HCT116 (cell line): ENCODE measurements at regions of chr3 and their contacts with region 1.

Region 1: GRCh38 chr3:167882067-167882667 is 146.6 kb downstream of the SERPINI1 start:
- DNase-seq: peak; percentile 39
- ATAC-seq: peak; percentile 65
- H3K4me3 ChIP-seq: no peak overlapping the region
- H3K27ac ChIP-seq: no peak overlapping the region
- H3K4me1 ChIP-seq: no peaks in the 10 kb centered on the region
- H3K27me3 ChIP-seq: no peaks in the 10 kb centered on the region
- CTCF ChIP-seq: peak; percentile 52 to 58 (median 55); a peak in 5 of 6 replicates
- POLR2A ChIP-seq: no peak
- RAD21 ChIP-seq: peak; percentile 72

Region 2: GRCh38 chr3:167380004-167380689 is 502.0 kb before region 1 on chr3 and contains the start of gene ZBBX:
- CTCF ChIA-PET with region 1: interaction called, 40 read pairs
- POLR2A ChIA-PET with region 1: interaction called, 4 read pairs
- RAD21 ChIA-PET with region 1: interaction called in 1 of 2 experiments, 7 read pairs
- intact Hi-C with region 1: loop called (anchors 5 kb)
- DNase-seq: peak; percentile 77
- ATAC-seq: peak; percentile 92
- H3K4me3 ChIP-seq: peak within 1 kb of the TSS; percentile 54 to 61
- H3K27ac ChIP-seq: no peak within 1 kb of the TSS
- H3K4me1 ChIP-seq: peaks cover 0 to 11% of the 10 kb centered on the region in 2 experiments; a peak in 3 of 4 replicates
- H3K27me3 ChIP-seq: no peaks in the 10 kb centered on the region
- CTCF ChIP-seq: peak; percentile 74 to 94 (median 88)
- POLR2A ChIP-seq: no peak
- RAD21 ChIP-seq: peak; percentile 71
- total RNA-seq, gene ZBBX: 0.81 TPM

Region 3: GRCh38 chr3:167406875-167407492 is 475.2 kb before region 1 on chr3:
- CTCF ChIA-PET with region 1: interaction called, 14 read pairs
- POLR2A ChIA-PET with region 1: interaction called, 3 read pairs
- RAD21 ChIA-PET with region 1: no interaction called
- intact Hi-C with region 1: loop called (anchors 2 kb)
- DNase-seq: peak; percentile 58
- ATAC-seq: peak; percentile 99
- H3K4me3 ChIP-seq: no peak overlapping the region
- H3K27ac ChIP-seq: no peak overlapping the region
- H3K4me1 ChIP-seq: no peaks in the 10 kb centered on the region
- H3K27me3 ChIP-seq: no peaks in the 10 kb centered on the region
- CTCF ChIP-seq: peak; percentile 58 to 81 (median 79)
- POLR2A ChIP-seq: no peak
- RAD21 ChIP-seq: peak; percentile 88

Region 4: GRCh38 chr3:167684388-167684993 is 197.7 kb before region 1 on chr3:
- CTCF ChIA-PET with region 1: interaction called, 6 read pairs
- POLR2A ChIA-PET with region 1: no interaction called
- RAD21 ChIA-PET with region 1: no interaction called
- intact Hi-C with region 1: loop called (anchors 10 kb)
- DNase-seq: peak; percentile 46
- ATAC-seq: peak; percentile 73
- H3K4me3 ChIP-seq: no peak overlapping the region
- H3K27ac ChIP-seq: no peak overlapping the region
- H3K4me1 ChIP-seq: no peaks in the 10 kb centered on the region
- H3K27me3 ChIP-seq: no peaks in the 10 kb centered on the region
- CTCF ChIP-seq: peak; percentile 28 to 74 (median 53); a peak in 5 of 6 replicates
- POLR2A ChIP-seq: no peak
- RAD21 ChIP-seq: peak; percentile 48

Region 5: GRCh38 chr3:167837466-167837865 is 44.7 kb before region 1 on chr3:
- CTCF ChIA-PET with region 1: interaction called, 7 read pairs
- POLR2A ChIA-PET with region 1: no interaction called
- RAD21 ChIA-PET with region 1: no interaction called
- intact Hi-C with region 1: loop called (anchors 5 kb)
- DNase-seq: no peak
- ATAC-seq: no peak
- H3K4me3 ChIP-seq: no peak overlapping the region
- H3K27ac ChIP-seq: no peak overlapping the region
- H3K4me1 ChIP-seq: no peaks in the 10 kb centered on the region
- H3K27me3 ChIP-seq: no peaks in the 10 kb centered on the region
- CTCF ChIP-seq: peak in 2 of 3 experiments; percentile 15 to 48; a peak in 1 of 6 replicates
- POLR2A ChIP-seq: no peak
- RAD21 ChIP-seq: peak; percentile 48

Region 6: DNA sequence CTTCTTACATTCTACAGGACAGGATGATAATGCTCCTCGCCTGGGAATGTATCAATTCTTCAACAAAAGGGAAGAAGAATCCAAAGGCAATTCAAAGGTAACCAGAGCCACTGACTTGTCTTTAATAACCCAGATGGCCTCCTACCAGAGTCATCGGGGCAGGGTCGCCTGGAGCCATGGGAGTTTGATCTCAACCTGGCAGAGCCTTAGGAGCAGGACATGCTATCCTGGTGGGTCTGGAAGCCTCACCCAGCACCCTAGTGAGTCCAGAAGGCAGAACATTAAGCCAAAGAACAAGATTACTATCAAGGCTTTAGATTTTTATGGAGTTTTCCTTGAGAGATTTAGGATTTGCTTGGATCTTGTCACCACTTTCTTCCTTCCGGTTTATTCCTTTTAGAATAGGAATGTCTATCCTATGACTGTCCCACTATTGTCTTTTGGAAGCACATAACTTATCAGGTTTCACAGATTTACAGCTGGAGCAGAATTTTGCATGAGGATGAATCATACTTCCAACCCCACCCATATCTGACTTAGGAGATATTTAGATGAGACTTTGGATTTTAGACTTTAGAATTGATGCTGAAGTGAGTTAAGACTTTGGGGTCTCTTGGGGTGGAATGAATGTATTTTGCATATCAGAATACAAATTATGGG is 543.9 kb after region 1 on chr3:
- CTCF ChIA-PET with region 1: no interaction called
- POLR2A ChIA-PET with region 1: no interaction called
- RAD21 ChIA-PET with region 1: no interaction called
- intact Hi-C with region 1: no loop called
- DNase-seq: no peak
- ATAC-seq: no peak
- H3K4me3 ChIP-seq: no peak overlapping the region
- H3K27ac ChIP-seq: no peak overlapping the region
- H3K4me1 ChIP-seq: no peaks in the 10 kb centered on the region
- H3K27me3 ChIP-seq: 0 out of 2 replicates have a peak, but pooled peaks cover 3% of the 10 kb centered on the region
- CTCF ChIP-seq: no peak
- POLR2A ChIP-seq: no peak
- RAD21 ChIP-seq: no peak